ENCODE measurements at regions of chr3 and their contacts with region 1.

Region 1: GRCh38 chr3:33144433-33144832 is 30.6 kb downstream of the CRTAP start:
- DNase-seq: no peak
- H3K4me3 ChIP-seq: no peak overlapping the region
- H3K27ac ChIP-seq: no peak overlapping the region
- H3K4me1 ChIP-seq: no peaks in the 10 kb centered on the region
- H3K27me3 ChIP-seq: no peaks in the 10 kb centered on the region
- CTCF ChIP-seq: no peak
- POLR2A ChIP-seq: no peak

Region 2: DNA sequence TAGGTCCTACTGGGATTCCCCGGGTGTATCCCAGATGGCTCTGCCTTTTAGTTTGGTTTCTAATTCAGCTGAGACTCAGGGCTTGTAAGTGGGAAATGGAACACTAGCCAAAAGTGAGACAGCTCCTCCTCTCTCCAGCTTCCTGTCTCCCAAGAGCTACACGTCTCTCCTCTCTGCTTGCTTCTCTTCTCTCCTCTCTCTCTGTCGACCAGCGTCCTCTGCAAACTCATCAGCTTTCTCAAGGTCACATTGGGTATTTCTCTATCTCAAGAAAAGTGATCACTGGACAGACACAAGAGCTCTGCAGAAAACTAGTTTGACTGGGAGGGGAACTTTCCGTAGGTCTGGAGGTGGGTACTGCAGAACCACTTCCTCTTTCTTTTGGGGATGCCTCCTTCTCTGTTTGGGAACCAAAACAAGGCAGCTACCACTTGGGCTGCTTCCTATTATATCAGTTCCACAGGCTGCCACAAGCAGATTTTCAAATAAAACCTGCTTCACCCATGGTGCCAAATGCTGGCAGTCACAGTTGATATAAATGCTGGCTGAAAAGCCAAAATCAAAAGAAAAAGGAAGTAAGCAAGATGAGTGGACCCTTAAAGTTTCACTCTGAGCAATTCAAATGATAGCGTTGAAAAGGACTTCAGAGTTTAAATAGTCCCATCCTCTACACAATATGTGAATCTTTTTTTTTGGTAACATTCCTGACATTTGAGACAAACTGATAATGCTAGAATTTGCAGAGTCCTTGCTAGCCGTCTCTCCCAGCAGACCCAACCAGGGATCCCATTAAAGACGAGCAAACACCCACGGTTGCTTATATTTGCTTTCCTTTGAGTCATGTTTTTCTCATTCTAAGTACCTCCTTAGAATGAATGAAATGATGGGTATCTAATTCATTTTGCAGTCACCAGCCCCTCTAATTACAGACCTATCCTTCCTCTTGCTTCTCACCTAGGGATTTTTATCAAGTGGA is 566.6 kb before region 1 on chr3:
- intact Hi-C with region 1: no loop called
- DNase-seq: no peak
- H3K4me3 ChIP-seq: no peak overlapping the region
- H3K27ac ChIP-seq: peak overlapping the region in 1 of 2 donors; percentile 41
- H3K4me1 ChIP-seq: no peaks in the 10 kb centered on the region
- H3K27me3 ChIP-seq: no peaks in the 10 kb centered on the region
- CTCF ChIP-seq: no peak
- POLR2A ChIP-seq: no peak

Region 3: GRCh38 chr3:33202711-33203457 is 58.5 kb after region 1 on chr3:
- intact Hi-C with region 1: loop called (anchors 10 kb)
- DNase-seq: peak; percentile 71
- H3K4me3 ChIP-seq: no peak overlapping the region
- H3K27ac ChIP-seq: peak overlapping the region in 1 of 2 donors; percentile 55
- H3K4me1 ChIP-seq: no peaks in the 10 kb centered on the region
- H3K27me3 ChIP-seq: no peaks in the 10 kb centered on the region
- CTCF ChIP-seq: no peak
- POLR2A ChIP-seq: no peak

Measured in prostate gland (tissue), 2 donors.